Ascending aorta (tissue), 2 donors: ENCODE measurements at regions of chr2 and their contacts with region 1.

Region 1: DNA sequence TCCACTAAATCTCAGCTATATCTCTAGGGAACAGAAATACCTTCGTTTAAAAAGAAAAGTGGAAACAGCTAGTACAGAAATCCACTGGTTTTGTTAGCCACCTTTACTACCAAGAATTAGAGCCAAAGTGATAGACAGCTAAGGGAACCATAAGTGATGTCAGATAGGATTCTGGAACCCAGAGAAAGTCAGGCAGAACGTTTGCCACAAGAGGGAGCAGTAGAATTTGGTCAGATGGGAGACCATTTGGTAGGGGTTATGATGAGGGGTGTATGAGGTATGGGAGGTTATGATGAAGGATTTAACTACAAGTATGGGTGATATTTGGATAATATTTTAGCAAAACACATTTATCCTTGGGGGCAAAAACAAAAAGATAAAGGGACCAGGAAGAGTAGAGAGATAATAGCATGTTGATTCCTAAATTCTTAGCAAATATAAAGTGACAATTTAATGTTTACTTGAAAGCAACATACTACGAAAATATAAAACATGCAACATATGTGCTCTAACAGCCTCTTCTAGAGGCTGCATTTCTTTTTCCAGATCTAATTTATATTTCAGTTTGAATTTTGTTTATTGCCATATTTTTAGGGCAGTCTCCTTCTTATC is 3.3 kb downstream of the SLC8A1 start:
- DNase-seq: no peak
- H3K4me3 ChIP-seq: no peak overlapping the region
- H3K27ac ChIP-seq: no peak overlapping the region
- H3K4me1 ChIP-seq: peaks cover 2 to 7% of the 10 kb centered on the region in 2 donors
- H3K27me3 ChIP-seq: no peaks in the 10 kb centered on the region
- CTCF ChIP-seq: peak; percentile 14 to 52 (median 14)

Region 2: DNA sequence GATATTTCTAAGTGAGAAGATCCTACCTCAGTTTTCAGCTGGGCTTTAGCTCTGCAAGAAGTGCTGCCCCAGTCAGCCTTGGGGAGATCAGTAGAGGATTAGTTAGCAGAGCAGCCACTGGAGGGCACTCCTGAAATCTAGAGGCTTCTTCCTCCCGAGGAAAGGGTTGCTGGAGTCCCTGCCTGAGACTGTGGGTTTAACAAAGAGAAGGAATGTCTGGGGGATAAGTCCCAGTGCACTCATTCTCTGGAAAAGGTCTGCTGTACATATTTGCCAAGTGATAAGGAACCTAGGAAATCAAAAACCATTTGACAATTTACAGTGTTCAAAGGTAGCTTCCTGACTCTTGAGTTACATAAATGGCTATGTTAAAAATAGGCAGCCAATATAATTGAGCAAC is 203.9 kb before region 1 on chr2:
- intact Hi-C with region 1: loop called (anchors 2 kb)
- DNase-seq: peak in 1 of 2 donors; percentile 70
- H3K4me3 ChIP-seq: no peak overlapping the region
- H3K27ac ChIP-seq: peak overlapping the region in 1 of 2 donors; percentile 34
- H3K4me1 ChIP-seq: peaks cover 0 to 12% of the 10 kb centered on the region in 2 donors
- H3K27me3 ChIP-seq: no peaks in the 10 kb centered on the region
- CTCF ChIP-seq: peak; percentile 26 to 57 (median 53)

Region 3: DNA sequence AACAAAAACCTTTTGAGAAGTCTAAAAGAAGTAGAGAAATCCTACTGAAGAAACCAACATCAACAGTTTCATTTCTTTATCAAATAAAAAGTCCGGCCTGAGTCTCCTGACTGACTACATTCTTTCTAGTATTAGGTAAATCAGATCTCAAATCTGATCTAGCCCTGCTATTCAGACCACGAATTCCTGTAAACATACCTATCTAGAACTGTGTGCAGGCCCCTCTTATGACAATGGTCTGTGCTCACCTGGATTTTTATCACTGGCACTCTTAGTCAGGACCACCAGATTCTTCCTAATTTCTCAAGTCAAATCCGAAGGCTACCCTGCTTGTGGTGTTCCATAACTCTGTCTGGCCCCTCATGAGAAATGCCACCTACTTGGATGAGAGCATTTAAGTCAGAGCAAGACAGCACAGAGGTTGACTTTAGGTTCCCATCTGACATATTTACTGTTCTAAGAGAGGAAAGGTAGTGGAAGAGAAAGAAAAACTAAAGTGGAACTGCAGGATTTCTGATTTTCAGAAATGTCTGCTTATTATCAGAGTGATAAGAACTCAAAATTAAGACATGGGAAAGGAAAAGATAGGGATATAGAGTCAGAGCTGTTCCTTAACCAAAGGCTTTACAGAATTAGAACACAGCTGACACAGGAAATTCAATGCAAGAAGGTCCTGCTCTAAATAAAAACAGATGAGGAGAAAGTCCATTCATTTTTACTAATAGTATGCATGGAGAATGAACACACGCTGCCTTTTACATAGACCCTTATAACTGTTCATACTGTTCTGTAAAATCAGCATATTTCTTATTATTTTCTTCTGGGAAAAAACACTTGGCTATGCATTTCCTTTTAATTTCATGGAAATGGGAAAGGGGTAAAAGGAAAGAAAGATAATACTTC is 53.2 kb before region 1 on chr2:
- intact Hi-C with region 1: loop called (anchors 5 kb)
- DNase-seq: no peak
- H3K4me3 ChIP-seq: no peak overlapping the region
- H3K27ac ChIP-seq: peak overlapping the region in 1 of 2 donors; percentile 24
- H3K4me1 ChIP-seq: peaks cover 0 to 6% of the 10 kb centered on the region in 2 donors
- H3K27me3 ChIP-seq: no peaks in the 10 kb centered on the region
- CTCF ChIP-seq: no peak

Region 4: GRCh38 chr2:40639320-40639719 is 190.7 kb after region 1 on chr2:
- intact Hi-C with region 1: no loop called
- DNase-seq: no peak
- H3K4me3 ChIP-seq: no peak overlapping the region
- H3K27ac ChIP-seq: no peak overlapping the region
- H3K4me1 ChIP-seq: no peaks in the 10 kb centered on the region
- H3K27me3 ChIP-seq: no peaks in the 10 kb centered on the region
- CTCF ChIP-seq: no peak

Region 5: GRCh38 chr2:41379496-41380221 is 931.1 kb after region 1 on chr2:
- intact Hi-C with region 1: no loop called
- DNase-seq: no peak
- H3K4me3 ChIP-seq: no peak overlapping the region
- H3K27ac ChIP-seq: no peak overlapping the region
- H3K4me1 ChIP-seq: no peaks in the 10 kb centered on the region
- H3K27me3 ChIP-seq: no peaks in the 10 kb centered on the region
- CTCF ChIP-seq: no peak